ENCODE measurements at regions of chr4 and their contacts with region 1.

Region 1: DNA sequence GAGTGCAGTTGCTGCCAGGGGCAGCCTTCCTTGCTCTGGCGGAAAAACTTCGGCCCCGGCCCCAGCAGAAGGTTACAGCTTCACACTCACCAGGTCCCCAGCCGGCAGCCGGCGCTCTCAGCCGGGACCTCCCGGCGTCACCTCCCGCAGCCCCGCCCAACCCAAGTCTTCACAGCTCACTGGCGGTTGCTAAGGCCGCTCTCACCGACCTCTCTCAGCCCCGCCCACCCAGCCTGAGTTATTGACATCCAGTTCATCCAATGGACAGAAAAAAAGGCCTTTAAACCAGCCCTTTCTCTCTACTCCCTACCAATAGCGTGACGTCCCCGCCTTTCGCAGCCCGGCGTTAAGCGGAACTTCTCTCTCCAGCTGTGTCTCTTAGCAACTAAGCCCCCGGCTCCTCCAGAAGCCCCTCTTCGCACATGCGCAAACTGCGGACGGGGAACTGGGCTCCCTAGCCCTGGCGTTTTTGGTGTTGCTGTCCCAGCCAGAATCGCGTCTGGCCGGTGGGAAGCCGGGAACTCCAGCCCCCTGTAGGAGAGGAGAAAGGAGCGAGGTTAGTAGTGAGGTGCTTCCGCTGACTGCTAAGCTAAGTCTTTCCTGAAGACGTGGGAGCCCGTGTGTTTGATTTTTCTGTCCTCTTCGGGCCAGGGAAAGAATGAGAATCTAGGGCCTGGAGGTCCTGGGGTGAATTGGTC is at the start of gene BBS12:
- DNase-seq: peak; percentile 96 to 99 (median 98)
- ATAC-seq: peak; percentile 97
- H3K4me3 ChIP-seq: peak within 1 kb of the TSS; percentile 75
- H3K4me3 Mint-ChIP-seq: peak within 1 kb of the TSS; percentile 97
- H3K27ac ChIP-seq: peak within 1 kb of the TSS; percentile 84 to 91
- H3K27ac Mint-ChIP-seq: peak within 1 kb of the TSS; percentile 96
- H3K4me1 ChIP-seq: peaks cover 12% of the 10 kb centered on the region
- H3K4me1 Mint-ChIP-seq: peaks cover 25% of the 10 kb centered on the region
- H3K27me3 ChIP-seq: no peaks in the 10 kb centered on the region
- H3K27me3 Mint-ChIP-seq: no peaks in the 10 kb centered on the region
- CTCF ChIP-seq: no peak
- total RNA-seq, gene BBS12: 0.80 to 0.84 TPM

Region 2: GRCh38 chr4:121642292-121642691 is 1090.2 kb before region 1 on chr4:
- CTCF ChIA-PET with region 1: no interaction called
- POLR2A ChIA-PET with region 1: no interaction called
- intact Hi-C with region 1: no loop called
- DNase-seq: no peak
- ATAC-seq: no peak
- H3K4me3 ChIP-seq: no peak overlapping the region
- H3K4me3 Mint-ChIP-seq: no peak overlapping the region
- H3K27ac ChIP-seq: no peak overlapping the region
- H3K27ac Mint-ChIP-seq: no peak overlapping the region
- H3K4me1 ChIP-seq: no peaks in the 10 kb centered on the region
- H3K4me1 Mint-ChIP-seq: no peaks in the 10 kb centered on the region
- H3K27me3 ChIP-seq: no peaks in the 10 kb centered on the region
- H3K27me3 Mint-ChIP-seq: peaks cover 13% of the 10 kb centered on the region
- CTCF ChIP-seq: no peak

Region 3: GRCh38 chr4:121800961-121801714 is 931.3 kb before region 1 on chr4 and contains the start of gene EXOSC9:
- CTCF ChIA-PET with region 1: no interaction called
- POLR2A ChIA-PET with region 1: interaction called, 9 read pairs
- intact Hi-C with region 1: loop called in 1 of 2 experiments (anchors 10 kb)
- DNase-seq: peak; percentile 88 to 97 (median 94)
- ATAC-seq: peak; percentile 87
- H3K4me3 ChIP-seq: peak within 1 kb of the TSS; percentile 95
- H3K4me3 Mint-ChIP-seq: peak within 1 kb of the TSS; percentile 96
- H3K27ac ChIP-seq: peak within 1 kb of the TSS; percentile 80 to 96
- H3K27ac Mint-ChIP-seq: peak within 1 kb of the TSS; percentile 100
- H3K4me1 ChIP-seq: peaks cover 13% of the 10 kb centered on the region
- H3K4me1 Mint-ChIP-seq: peaks cover 51% of the 10 kb centered on the region
- H3K27me3 ChIP-seq: no peaks in the 10 kb centered on the region
- H3K27me3 Mint-ChIP-seq: no peaks in the 10 kb centered on the region
- CTCF ChIP-seq: no peak
- total RNA-seq, gene EXOSC9: 71.6 to 72.7 TPM

Region 4: GRCh38 chr4:122151982-122152710 is 580.3 kb before region 1 on chr4 and contains the start of gene BLTP1:
- CTCF ChIA-PET with region 1: no interaction called
- POLR2A ChIA-PET with region 1: interaction called, 3 read pairs
- intact Hi-C with region 1: loop called in 1 of 2 experiments (anchors 5 kb)
- DNase-seq: peak; percentile 73 to 94 (median 84)
- ATAC-seq: peak; percentile 88
- H3K4me3 ChIP-seq: peak within 1 kb of the TSS; percentile 93
- H3K4me3 Mint-ChIP-seq: peak within 1 kb of the TSS; percentile 94
- H3K27ac ChIP-seq: peak within 1 kb of the TSS; percentile 81 to 89
- H3K27ac Mint-ChIP-seq: peak within 1 kb of the TSS; percentile 94
- H3K4me1 ChIP-seq: peaks cover 11% of the 10 kb centered on the region
- H3K4me1 Mint-ChIP-seq: peaks cover 77% of the 10 kb centered on the region
- H3K27me3 ChIP-seq: no peaks in the 10 kb centered on the region
- H3K27me3 Mint-ChIP-seq: no peaks in the 10 kb centered on the region
- CTCF ChIP-seq: no peak
- total RNA-seq, gene BLTP1: 86.9 to 93.6 TPM

Region 5: GRCh38 chr4:122758033-122758432 is 25.6 kb after region 1 on chr4:
- CTCF ChIA-PET with region 1: interaction called, 15 read pairs
- POLR2A ChIA-PET with region 1: no interaction called
- intact Hi-C with region 1: no loop called
- DNase-seq: peak in 3 of 14 experiments; percentile 33 to 57 (median 53)
- ATAC-seq: no peak
- H3K4me3 ChIP-seq: no peak overlapping the region
- H3K4me3 Mint-ChIP-seq: no peak overlapping the region
- H3K27ac ChIP-seq: no peak overlapping the region
- H3K27ac Mint-ChIP-seq: no peak overlapping the region
- H3K4me1 ChIP-seq: no peaks in the 10 kb centered on the region
- H3K4me1 Mint-ChIP-seq: peaks cover 11% of the 10 kb centered on the region
- H3K27me3 ChIP-seq: no peaks in the 10 kb centered on the region
- H3K27me3 Mint-ChIP-seq: peaks cover 31% of the 10 kb centered on the region
- CTCF ChIP-seq: peak; percentile 82

Region 6: GRCh38 chr4:123396307-123397143 is 664.0 kb after region 1 on chr4 and contains the start of gene SPRY1:
- CTCF ChIA-PET with region 1: no interaction called
- POLR2A ChIA-PET with region 1: no interaction called
- intact Hi-C with region 1: loop called (anchors 10 kb)
- DNase-seq: peak in 13 of 14 experiments; percentile 38 to 87 (median 62)
- ATAC-seq: peak; percentile 67
- H3K4me3 ChIP-seq: peak within 1 kb of the TSS; percentile 75
- H3K4me3 Mint-ChIP-seq: peak within 1 kb of the TSS; percentile 90
- H3K27ac ChIP-seq: no peak within 1 kb of the TSS
- H3K27ac Mint-ChIP-seq: peak within 1 kb of the TSS; percentile 70
- H3K4me1 ChIP-seq: peaks cover 33% of the 10 kb centered on the region
- H3K4me1 Mint-ChIP-seq: peaks cover 30% of the 10 kb centered on the region
- H3K27me3 ChIP-seq: peaks cover 4 to 11% of the 10 kb centered on the region in 2 experiments
- H3K27me3 Mint-ChIP-seq: peaks cover 25% of the 10 kb centered on the region
- CTCF ChIP-seq: no peak
- total RNA-seq, gene SPRY1: 19.6 to 20.3 TPM